ENCODE measurements at regions of chr5 and their contacts with region 1.

Region 1: GRCh38 chr5:142032747-142033631 is 20.2 kb upstream of the GNPDA1 start:
- DNase-seq: no peak

Region 2: GRCh38 chr5:143186623-143187022 is 1153.6 kb after region 1 on chr5:
- intact Hi-C with region 1: loop called in 1 of 2 experiments (anchors 5 kb)
- DNase-seq: no peak

Measured in posterior vena cava (tissue), 2 donors.